ENCODE measurements at regions of chr2 and their contacts with region 1.

Region 1: DNA sequence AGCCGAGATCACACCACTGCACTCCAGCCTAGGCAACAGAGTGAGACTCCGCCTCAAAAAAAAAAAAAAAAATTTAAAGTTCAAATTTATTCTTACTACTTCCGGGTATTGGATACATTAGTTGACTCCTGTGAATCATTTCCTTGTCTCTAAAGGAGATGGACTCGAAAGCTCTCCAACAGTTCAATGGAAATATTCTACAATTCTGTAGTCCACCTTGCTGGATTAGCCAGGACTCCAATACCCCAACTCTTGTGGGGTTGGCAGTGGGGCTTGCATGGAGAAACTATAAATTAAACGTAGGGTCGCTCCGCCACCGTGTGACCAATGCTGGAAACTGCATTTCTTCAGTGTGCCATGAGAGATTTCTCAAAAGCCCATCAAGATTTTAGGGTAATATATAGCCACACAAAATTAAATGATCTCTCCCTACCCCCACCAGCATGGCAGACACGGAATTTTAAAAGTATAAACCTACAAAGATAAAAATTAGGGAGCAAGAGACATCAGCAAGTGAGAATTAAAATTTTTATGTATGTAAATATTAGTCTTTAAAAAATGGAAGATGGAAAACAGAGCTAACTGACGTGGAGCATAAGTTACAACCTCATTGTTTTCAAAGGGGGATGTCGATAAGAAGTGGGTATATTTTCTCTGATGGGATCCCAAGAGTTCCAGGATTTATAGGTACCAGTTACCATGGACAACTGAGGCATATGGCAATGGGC is 27.8 kb upstream of the GAREM2 start:
- DNase-seq: no peak

Region 2: GRCh38 chr2:25951071-25951547 is 194.0 kb before region 1 on chr2:
- intact Hi-C with region 1: loop called (anchors 10 kb)
- DNase-seq: peak; percentile 94

Region 3: DNA sequence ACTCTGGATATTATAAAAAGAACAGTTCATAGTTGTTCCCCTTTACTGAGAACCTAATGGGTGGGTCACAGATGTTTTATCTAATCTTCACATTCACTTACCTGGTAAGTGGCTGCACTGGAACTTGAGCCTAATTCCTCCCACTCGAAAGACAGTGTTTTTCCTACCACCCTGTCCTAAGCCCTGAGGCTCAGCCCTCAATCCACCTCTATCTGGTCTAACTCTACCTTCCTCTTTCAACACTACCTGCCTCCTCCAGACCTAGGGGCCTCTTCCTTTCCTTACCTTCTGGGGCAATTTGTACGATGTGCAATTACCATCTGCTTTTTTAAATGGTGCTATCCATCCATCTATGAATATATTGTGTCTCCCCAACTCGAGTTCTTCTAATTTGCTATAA is 153.2 kb before region 1 on chr2:
- intact Hi-C with region 1: loop called in 1 of 2 experiments (anchors 2 kb)
- DNase-seq: no peak